CD8-positive, alpha-beta T cell (primary cell): ENCODE measurements at regions of chr1 and their contacts with region 1.

Region 1: GRCh38 chr1:95072532-95073419 is at the start of gene ALG14:
- DNase-seq: peak; percentile 86 to 97 (median 95)
- ATAC-seq: peak; percentile 89
- H3K4me3 ChIP-seq: peak within 1 kb of the TSS; percentile 76 to 86
- H3K4me3 Mint-ChIP-seq: peak within 1 kb of the TSS; percentile 99
- H3K27ac ChIP-seq: peak within 1 kb of the TSS; percentile 61 to 86
- H3K27ac Mint-ChIP-seq: peak within 1 kb of the TSS; percentile 97
- H3K4me1 ChIP-seq: peaks cover 10% of the 10 kb centered on the region
- H3K4me1 Mint-ChIP-seq: peaks cover 13% of the 10 kb centered on the region
- H3K27me3 ChIP-seq: peaks cover 0 to 4% of the 10 kb centered on the region in 2 experiments
- H3K27me3 Mint-ChIP-seq: peaks cover 9% of the 10 kb centered on the region
- CTCF ChIP-seq: no peak
- total RNA-seq, gene ALG14: 0.27 to 0.61 TPM

Region 2: GRCh38 chr1:93345633-93346420 is 1726.9 kb before region 1 on chr1 and contains the start of gene DR1:
- CTCF ChIA-PET with region 1: no interaction called
- POLR2A ChIA-PET with region 1: interaction called, 3 read pairs
- intact Hi-C with region 1: loop called (anchors 5 to 10 kb)
- DNase-seq: peak; percentile 81 to 94 (median 90)
- ATAC-seq: peak; percentile 74
- H3K4me3 ChIP-seq: peak within 1 kb of the TSS; percentile 80 to 81
- H3K4me3 Mint-ChIP-seq: peak within 1 kb of the TSS; percentile 95
- H3K27ac ChIP-seq: peak within 1 kb of the TSS; percentile 72 to 91
- H3K27ac Mint-ChIP-seq: peak within 1 kb of the TSS; percentile 98
- H3K4me1 ChIP-seq: peaks cover 32% of the 10 kb centered on the region
- H3K4me1 Mint-ChIP-seq: peaks cover 51% of the 10 kb centered on the region
- H3K27me3 ChIP-seq: no peaks in the 10 kb centered on the region
- H3K27me3 Mint-ChIP-seq: no peaks in the 10 kb centered on the region
- CTCF ChIP-seq: no peak
- total RNA-seq, gene DR1: 49.1 to 49.9 TPM

Region 3: GRCh38 chr1:94854458-94855306 is 218.1 kb before region 1 on chr1:
- CTCF ChIA-PET with region 1: interaction called, 9 read pairs
- POLR2A ChIA-PET with region 1: interaction called, 4 read pairs
- intact Hi-C with region 1: loop called in 1 of 2 experiments (anchors 1 kb)
- DNase-seq: peak; percentile 53 to 88 (median 74)
- ATAC-seq: peak; percentile 98
- H3K4me3 ChIP-seq: peak overlapping the region; percentile 50 to 51
- H3K4me3 Mint-ChIP-seq: no peak overlapping the region
- H3K27ac ChIP-seq: peak overlapping the region in 1 of 2 experiments; percentile 13
- H3K27ac Mint-ChIP-seq: no peak overlapping the region
- H3K4me1 ChIP-seq: no peaks in the 10 kb centered on the region
- H3K4me1 Mint-ChIP-seq: no peaks in the 10 kb centered on the region
- H3K27me3 ChIP-seq: no peaks in the 10 kb centered on the region
- H3K27me3 Mint-ChIP-seq: peaks cover 6% of the 10 kb centered on the region
- CTCF ChIP-seq: peak; percentile 72

Region 4: DNA sequence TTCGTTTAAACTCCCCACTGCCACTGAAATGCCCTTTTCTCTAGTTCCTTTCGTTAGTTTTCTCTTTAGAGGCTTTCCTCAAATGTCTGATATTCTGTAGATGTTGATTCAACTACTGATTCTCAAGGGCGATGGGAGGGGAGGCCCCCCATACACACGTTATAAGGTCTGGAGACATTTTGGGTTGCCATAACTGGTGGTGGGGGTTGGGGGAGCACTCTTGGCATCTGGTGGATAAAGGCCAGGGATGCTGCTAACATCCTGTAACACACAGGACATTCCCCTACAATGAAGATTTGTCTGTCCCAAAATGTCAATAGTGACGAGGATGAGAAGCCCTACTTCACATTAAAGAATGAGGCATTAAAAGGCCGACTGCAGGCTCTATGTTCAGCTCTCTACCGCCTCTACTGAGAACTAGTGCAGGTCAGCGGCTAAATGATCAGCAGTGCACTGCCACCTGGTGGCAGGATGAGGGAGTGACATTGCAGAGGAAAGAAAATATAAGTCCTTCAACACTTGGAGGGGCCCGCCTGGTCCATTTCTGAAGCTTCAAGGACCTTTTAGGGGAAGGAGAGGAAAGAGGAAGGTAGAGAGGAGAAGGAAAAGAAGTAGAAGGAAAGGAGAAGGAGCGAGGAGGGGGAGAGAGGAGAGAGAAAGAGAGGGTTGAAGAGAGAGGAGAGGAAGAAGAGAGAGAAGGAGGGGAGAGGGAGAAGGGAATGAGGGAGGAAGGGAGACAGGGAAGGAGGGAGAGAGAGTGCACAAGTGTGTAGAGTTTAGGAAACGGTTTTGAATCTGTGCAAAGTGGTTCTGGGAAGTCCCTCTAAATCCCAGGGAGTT is 29.4 kb before region 1 on chr1:
- CTCF ChIA-PET with region 1: interaction called, 3 read pairs
- POLR2A ChIA-PET with region 1: interaction called, 4 read pairs
- intact Hi-C with region 1: loop called in 1 of 2 experiments (anchors 1 kb)
- DNase-seq: peak; percentile 56 to 87 (median 78)
- ATAC-seq: peak; percentile 100
- H3K4me3 ChIP-seq: no peak overlapping the region
- H3K4me3 Mint-ChIP-seq: no peak overlapping the region
- H3K27ac ChIP-seq: no peak overlapping the region
- H3K27ac Mint-ChIP-seq: no peak overlapping the region
- H3K4me1 ChIP-seq: no peaks in the 10 kb centered on the region
- H3K4me1 Mint-ChIP-seq: no peaks in the 10 kb centered on the region
- H3K27me3 ChIP-seq: no peaks in the 10 kb centered on the region
- H3K27me3 Mint-ChIP-seq: no peaks in the 10 kb centered on the region
- CTCF ChIP-seq: peak; percentile 100

Region 5: DNA sequence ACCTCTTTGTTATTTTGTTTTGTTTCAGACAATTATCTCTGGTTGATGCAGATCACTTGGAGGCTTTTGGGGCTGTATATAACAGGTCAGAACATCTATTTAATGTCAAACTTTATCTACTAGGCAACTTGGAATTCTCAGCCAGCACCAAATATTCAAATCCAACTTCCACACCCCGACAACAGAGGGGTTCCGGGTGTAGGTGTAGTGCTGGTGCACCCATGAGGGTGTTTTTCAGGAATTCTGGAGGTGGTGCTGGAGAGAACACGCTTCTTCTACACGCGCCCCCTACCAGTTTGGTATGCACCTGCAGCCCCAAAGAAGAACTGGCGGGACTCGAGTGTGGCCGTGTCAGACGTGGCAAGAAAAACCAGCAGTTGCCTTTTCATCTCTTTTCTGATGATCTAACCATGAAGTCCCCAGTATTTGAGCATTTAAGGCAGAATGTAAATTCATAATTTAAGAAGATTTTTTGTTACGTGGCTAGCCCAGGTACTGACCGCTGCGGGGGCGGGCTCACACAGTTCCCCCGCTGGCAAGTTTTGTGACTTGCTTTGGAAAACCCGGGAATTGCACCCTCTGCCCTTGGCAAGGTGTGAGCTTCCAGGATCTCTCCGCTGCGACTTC is 43.9 kb after region 1 on chr1:
- CTCF ChIA-PET with region 1: interaction called, 4 read pairs
- POLR2A ChIA-PET with region 1: interaction called, 3 read pairs
- intact Hi-C with region 1: loop called in 1 of 2 experiments (anchors 1 kb)
- DNase-seq: peak in 8 of 9 experiments; percentile 14 to 69 (median 50)
- ATAC-seq: peak; percentile 73
- H3K4me3 ChIP-seq: peak overlapping the region; percentile 47 to 68
- H3K4me3 Mint-ChIP-seq: peak overlapping the region; percentile 90
- H3K27ac ChIP-seq: no peak overlapping the region
- H3K27ac Mint-ChIP-seq: no peak overlapping the region
- H3K4me1 ChIP-seq: peaks cover 5% of the 10 kb centered on the region
- H3K4me1 Mint-ChIP-seq: peaks cover 8% of the 10 kb centered on the region
- H3K27me3 ChIP-seq: peaks cover 0 to 6% of the 10 kb centered on the region in 2 experiments
- H3K27me3 Mint-ChIP-seq: peaks cover 49% of the 10 kb centered on the region
- CTCF ChIP-seq: peak; percentile 63

Region 6: GRCh38 chr1:95146637-95147036 is 73.9 kb after region 1 on chr1:
- CTCF ChIA-PET with region 1: no interaction called
- POLR2A ChIA-PET with region 1: no interaction called
- intact Hi-C with region 1: no loop called
- DNase-seq: no peak
- ATAC-seq: no peak
- H3K4me3 ChIP-seq: no peak overlapping the region
- H3K4me3 Mint-ChIP-seq: no peak overlapping the region
- H3K27ac ChIP-seq: no peak overlapping the region
- H3K27ac Mint-ChIP-seq: no peak overlapping the region
- H3K4me1 ChIP-seq: no peaks in the 10 kb centered on the region
- H3K4me1 Mint-ChIP-seq: no peaks in the 10 kb centered on the region
- H3K27me3 ChIP-seq: no peaks in the 10 kb centered on the region
- H3K27me3 Mint-ChIP-seq: peaks cover 6% of the 10 kb centered on the region
- CTCF ChIP-seq: no peak